ENCODE measurements at regions of chr4 and their contacts with region 1.

Region 1: GRCh38 chr4:170589597-170590191 is 499.9 kb upstream of the AADAT start:
- DNase-seq: peak; percentile 54
- H3K4me3 ChIP-seq: no peak overlapping the region
- H3K27ac ChIP-seq: no peak overlapping the region
- H3K4me1 ChIP-seq: no peaks in the 10 kb centered on the region
- H3K27me3 ChIP-seq: no peaks in the 10 kb centered on the region
- CTCF ChIP-seq: peak; percentile 69 to 74

Region 2: GRCh38 chr4:170138580-170139194 is 451.0 kb before region 1 on chr4:
- CTCF ChIA-PET with region 1: no interaction called
- dilution Hi-C with region 1: no loop called
- in situ Hi-C with region 1: no loop called
- intact Hi-C with region 1: loop called (anchors 2 kb)
- DNase-seq: peak; percentile 63
- H3K4me3 ChIP-seq: no peak overlapping the region
- H3K27ac ChIP-seq: no peak overlapping the region
- H3K4me1 ChIP-seq: peaks cover 9% of the 10 kb centered on the region
- H3K27me3 ChIP-seq: no peaks in the 10 kb centered on the region
- CTCF ChIP-seq: peak; percentile 82 to 91

Region 3: GRCh38 chr4:170259631-170260153 is 330.0 kb before region 1 on chr4:
- CTCF ChIA-PET with region 1: no interaction called
- dilution Hi-C with region 1: no loop called
- in situ Hi-C with region 1: loop called in 1 of 2 experiments (anchors 25 kb)
- intact Hi-C with region 1: no loop called
- DNase-seq: peak; percentile 88
- H3K4me3 ChIP-seq: no peak overlapping the region
- H3K27ac ChIP-seq: no peak overlapping the region
- H3K4me1 ChIP-seq: no peaks in the 10 kb centered on the region
- H3K27me3 ChIP-seq: no peaks in the 10 kb centered on the region
- CTCF ChIP-seq: peak; percentile 97 to 98

Region 4: DNA sequence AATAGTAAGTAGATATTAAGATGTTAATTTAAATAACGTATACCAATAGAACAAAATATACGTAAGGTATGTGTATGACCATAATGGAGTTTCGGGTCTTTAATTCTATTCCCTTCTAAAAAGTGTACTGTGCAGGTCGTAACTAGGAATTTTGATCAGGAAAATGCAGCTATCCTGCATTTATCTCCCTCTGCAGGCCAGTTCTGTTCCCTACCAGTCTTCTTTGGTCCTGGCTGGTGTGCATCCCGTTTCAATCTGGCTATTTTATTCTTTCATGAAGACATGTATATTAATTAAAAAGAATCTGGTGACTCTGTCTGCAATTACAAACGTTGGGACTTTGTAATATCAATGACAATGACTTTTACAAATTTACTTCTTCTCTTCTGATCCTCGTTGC is 34.2 kb after region 1 on chr4:
- CTCF ChIA-PET with region 1: no interaction called
- dilution Hi-C with region 1: no loop called
- in situ Hi-C with region 1: no loop called
- intact Hi-C with region 1: loop called (anchors 2 kb)
- DNase-seq: no peak
- H3K4me3 ChIP-seq: no peak overlapping the region
- H3K27ac ChIP-seq: no peak overlapping the region
- H3K4me1 ChIP-seq: no peaks in the 10 kb centered on the region
- H3K27me3 ChIP-seq: no peaks in the 10 kb centered on the region
- CTCF ChIP-seq: peak in 1 of 2 donors; percentile 24

Region 5: DNA sequence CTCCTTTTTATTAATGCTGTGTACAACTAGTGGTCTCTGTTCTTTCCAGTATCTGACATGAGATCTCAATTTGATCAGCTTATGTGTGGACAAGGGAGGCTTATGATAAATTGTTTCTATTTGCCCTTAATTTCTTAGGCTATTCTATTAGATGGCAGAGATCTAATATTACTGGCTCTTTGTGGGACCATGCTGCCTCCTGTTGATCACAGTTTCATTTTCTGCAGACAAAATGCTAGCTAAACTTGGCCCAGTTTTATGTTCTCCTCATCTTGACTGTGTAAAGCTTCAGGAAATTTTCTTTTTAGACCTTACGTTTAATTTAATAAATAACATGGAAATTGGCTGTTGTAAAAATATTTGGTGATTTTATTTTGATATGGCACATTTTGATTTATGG is 127.2 kb after region 1 on chr4:
- CTCF ChIA-PET with region 1: interaction called, 4 read pairs
- dilution Hi-C with region 1: no loop called
- in situ Hi-C with region 1: no loop called
- intact Hi-C with region 1: loop called (anchors 5 kb)
- DNase-seq: no peak
- H3K4me3 ChIP-seq: no peak overlapping the region
- H3K27ac ChIP-seq: no peak overlapping the region
- H3K4me1 ChIP-seq: no peaks in the 10 kb centered on the region
- H3K27me3 ChIP-seq: no peaks in the 10 kb centered on the region
- CTCF ChIP-seq: peak in 1 of 2 donors; percentile 14

Region 6: DNA sequence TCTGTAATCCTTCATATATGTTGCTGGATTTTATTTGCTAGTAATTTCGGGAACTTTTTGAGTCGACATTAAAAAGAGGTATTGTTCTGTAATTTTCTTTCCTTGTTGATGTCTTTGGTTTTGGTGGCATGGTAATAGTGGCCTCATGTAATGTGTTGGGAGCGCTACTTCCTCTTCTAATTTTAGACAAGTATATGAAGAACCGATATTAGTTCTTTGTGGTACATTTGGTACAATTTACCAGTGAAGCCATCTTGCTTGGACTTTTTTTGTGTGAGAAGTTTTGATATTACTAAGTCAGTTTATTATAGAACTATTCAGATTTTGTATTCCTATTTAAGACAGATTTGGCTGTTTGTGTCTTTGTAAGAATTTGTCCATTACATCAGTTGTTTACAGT is 169.3 kb after region 1 on chr4:
- CTCF ChIA-PET with region 1: no interaction called
- dilution Hi-C with region 1: no loop called
- in situ Hi-C with region 1: no loop called
- intact Hi-C with region 1: no loop called
- DNase-seq: no peak
- H3K4me3 ChIP-seq: no peak overlapping the region
- H3K27ac ChIP-seq: no peak overlapping the region
- H3K4me1 ChIP-seq: no peaks in the 10 kb centered on the region
- H3K27me3 ChIP-seq: no peaks in the 10 kb centered on the region
- CTCF ChIP-seq: no peak

Region 7: DNA sequence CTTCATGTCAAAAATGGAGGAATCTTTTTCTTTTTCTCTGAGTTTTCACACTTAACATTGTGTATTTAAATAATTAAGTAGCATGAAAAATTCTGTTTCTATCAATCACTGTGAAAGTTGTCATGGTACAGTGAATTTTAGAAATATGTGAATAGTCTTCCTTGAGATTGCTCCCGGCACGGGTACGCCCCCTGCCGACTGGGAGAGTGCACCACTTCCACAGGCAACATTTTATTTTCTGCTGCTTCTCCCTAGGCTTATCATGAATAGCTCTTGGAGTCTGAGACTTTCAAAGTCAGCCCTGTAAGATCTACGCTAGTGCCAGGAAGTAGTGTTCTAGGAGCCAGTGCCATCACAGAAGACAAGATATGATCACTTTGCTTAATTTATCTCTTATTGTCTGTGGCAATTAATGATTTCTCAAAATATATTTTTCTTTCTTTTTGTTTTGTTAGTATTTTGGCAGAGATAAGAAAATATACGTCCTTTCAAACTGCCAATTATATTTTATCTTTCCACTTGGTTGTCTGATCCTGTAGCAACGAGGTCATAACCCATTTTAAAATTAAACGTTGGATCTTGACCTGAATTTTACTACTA is 263.8 kb after region 1 on chr4:
- CTCF ChIA-PET with region 1: interaction called, 4 read pairs
- dilution Hi-C with region 1: no loop called
- in situ Hi-C with region 1: loop called (anchors 10 to 25 kb)
- intact Hi-C with region 1: loop called (anchors 1 kb)
- DNase-seq: peak; percentile 44
- H3K4me3 ChIP-seq: no peak overlapping the region
- H3K27ac ChIP-seq: no peak overlapping the region
- H3K4me1 ChIP-seq: peaks cover 5% of the 10 kb centered on the region
- H3K27me3 ChIP-seq: no peaks in the 10 kb centered on the region
- CTCF ChIP-seq: peak; percentile 93 to 97

Measured in mammary epithelial cell (primary cell).